Calu3 (cell line): ENCODE measurements at regions of chr1 and their contacts with region 1.

Region 1: DNA sequence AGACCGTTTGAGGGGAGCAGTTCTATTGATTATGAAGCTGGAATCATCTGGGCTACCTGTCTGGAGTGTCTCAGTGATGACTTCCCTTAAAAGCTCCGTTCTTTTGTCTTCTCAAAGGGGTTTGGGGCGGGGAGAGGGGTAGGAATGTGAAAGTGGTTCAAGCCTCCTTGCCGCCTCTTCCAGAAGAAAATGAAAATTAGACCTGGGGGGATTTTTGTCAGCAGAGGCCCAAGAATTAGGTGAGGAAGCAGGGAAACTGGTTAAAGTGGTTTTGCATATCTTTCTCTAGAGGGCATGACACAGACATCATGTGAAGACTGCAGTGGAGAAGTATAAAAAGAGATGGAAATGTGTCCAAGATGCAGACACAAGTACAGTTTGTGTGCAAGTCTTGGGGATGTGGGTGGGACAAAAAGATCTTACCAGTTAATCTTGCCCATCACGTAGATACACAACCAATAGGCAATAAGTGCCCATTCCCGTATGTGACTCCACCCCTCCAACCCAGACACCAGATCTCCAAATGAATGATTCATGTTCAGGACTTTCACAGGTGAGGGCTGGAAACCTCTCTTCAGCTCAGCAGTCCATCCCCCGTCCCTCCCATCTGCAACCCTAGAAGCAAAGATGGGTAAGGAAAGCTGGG is 504 bp upstream of the MTMR11 start:
- DNase-seq: peak; percentile 82
- H3K4me3 Mint-ChIP-seq: peak overlapping the region; percentile 84
- H3K27ac Mint-ChIP-seq: peak overlapping the region; percentile 95
- H3K4me1 Mint-ChIP-seq: peaks cover 53% of the 10 kb centered on the region
- H3K27me3 Mint-ChIP-seq: no peaks in the 10 kb centered on the region
- CTCF ChIP-seq: no peak

Region 2: DNA sequence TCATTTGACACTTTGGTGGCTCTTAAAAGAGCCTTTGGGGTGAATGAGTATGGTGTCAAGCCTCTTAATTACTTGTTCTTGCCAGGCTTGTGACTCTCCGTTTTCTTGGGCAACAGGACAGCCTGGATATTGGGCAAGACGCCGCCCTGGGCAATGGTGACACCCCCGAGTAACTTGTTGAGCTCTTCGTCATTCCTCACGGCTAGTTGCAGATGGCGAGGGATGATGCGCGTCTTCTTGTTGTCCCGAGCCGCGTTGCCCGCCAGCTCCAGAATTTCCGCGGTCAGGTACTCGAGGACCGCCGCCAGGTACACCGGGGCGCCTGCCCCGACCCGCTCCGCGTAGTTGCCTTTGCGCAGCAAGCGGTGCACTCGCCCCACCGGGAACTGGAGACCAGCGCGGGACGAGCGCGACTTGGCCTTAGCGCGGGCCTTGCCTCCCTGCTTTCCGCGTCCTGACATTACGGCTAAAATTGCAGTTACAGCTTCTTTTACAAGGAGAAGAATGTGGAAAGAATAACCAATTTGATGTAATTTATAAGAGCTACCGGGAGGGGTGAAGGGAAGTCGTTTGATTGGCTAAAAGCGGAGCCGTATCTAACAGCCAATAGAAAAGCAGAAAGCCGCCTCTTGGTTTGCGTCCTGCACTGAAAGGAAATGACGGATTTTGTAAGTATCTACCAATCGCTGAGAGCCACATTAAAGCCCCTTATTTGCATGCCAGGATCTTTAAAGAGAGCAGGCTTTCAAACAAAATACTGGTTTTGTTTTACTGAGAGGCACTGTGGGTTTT is 49.5 kb before region 1 on chr1:
- CTCF ChIA-PET with region 1: interaction called, 4 read pairs
- intact Hi-C with region 1: loop called (anchors 2 kb)
- DNase-seq: peak; percentile 83
- H3K4me3 Mint-ChIP-seq: no peak overlapping the region
- H3K27ac Mint-ChIP-seq: no peak overlapping the region
- H3K4me1 Mint-ChIP-seq: no peaks in the 10 kb centered on the region
- H3K27me3 Mint-ChIP-seq: no peaks in the 10 kb centered on the region
- CTCF ChIP-seq: no peak

Region 3: GRCh38 chr1:150089846-150090520 is 152.8 kb after region 1 on chr1:
- CTCF ChIA-PET with region 1: no interaction called
- intact Hi-C with region 1: no loop called
- DNase-seq: no peak
- H3K4me3 Mint-ChIP-seq: no peak overlapping the region
- H3K27ac Mint-ChIP-seq: no peak overlapping the region
- H3K4me1 Mint-ChIP-seq: no peaks in the 10 kb centered on the region
- H3K27me3 Mint-ChIP-seq: no peaks in the 10 kb centered on the region
- CTCF ChIP-seq: no peak